ENCODE measurements at regions of chr2 and their contacts with region 1.

Region 1: DNA sequence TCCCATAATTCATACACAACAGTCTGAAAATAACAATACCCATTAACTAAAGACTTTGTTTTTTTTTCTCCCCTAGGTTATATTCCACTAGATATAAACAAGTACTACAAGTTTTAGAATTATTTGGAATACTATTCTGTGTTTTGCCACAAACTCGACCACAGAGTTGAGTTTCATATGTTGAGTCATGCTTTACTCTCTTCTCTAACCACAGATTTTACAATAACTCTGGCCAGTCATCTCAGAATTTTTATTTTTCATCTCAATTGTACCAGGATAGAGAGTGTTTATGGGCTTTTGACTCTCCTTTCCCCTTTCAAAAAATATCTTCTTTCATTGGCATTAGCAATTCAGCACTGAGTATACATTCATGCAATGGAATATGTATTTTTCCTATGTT is 348.7 kb upstream of the GALNT5 start:
- DNase-seq: no peak
- H3K4me3 Mint-ChIP-seq: no peak overlapping the region
- H3K27ac Mint-ChIP-seq: no peak overlapping the region
- H3K4me1 Mint-ChIP-seq: no peaks in the 10 kb centered on the region
- H3K27me3 Mint-ChIP-seq: no peaks in the 10 kb centered on the region

Region 2: GRCh38 chr2:157194097-157194688 is 285.4 kb after region 1 on chr2:
- CTCF ChIA-PET with region 1: no interaction called
- POLR2A ChIA-PET with region 1: no interaction called
- intact Hi-C with region 1: loop called (anchors 10 kb)
- DNase-seq: peak; percentile 13
- H3K4me3 Mint-ChIP-seq: no peak overlapping the region
- H3K27ac Mint-ChIP-seq: no peak overlapping the region
- H3K4me1 Mint-ChIP-seq: peaks cover 1% of the 10 kb centered on the region
- H3K27me3 Mint-ChIP-seq: peaks cover 7% of the 10 kb centered on the region

Measured in activated CD4-positive, alpha-beta memory T cell treated with anti-CD3 and anti-CD28 coated beads for 36 hours (primary cell).